SK-N-SH (cell line): ENCODE measurements at regions of chr2 and their contacts with region 1.

Region 1: GRCh38 chr2:80238692-80239469 is 65.7 kb downstream of the LRRTM1 start:
- DNase-seq: peak; percentile 24
- H3K4me3 ChIP-seq: no peak overlapping the region
- H3K27ac ChIP-seq: no peak overlapping the region
- H3K4me1 ChIP-seq: peaks cover 0 to 6% of the 10 kb centered on the region in 2 experiments; a peak in 1 of 4 replicates
- H3K27me3 ChIP-seq: no peaks in the 10 kb centered on the region
- CTCF ChIP-seq: peak; percentile 80
- EP300 ChIP-seq: no peak
- RAD21 ChIP-seq: peak; percentile 56

Region 2: DNA sequence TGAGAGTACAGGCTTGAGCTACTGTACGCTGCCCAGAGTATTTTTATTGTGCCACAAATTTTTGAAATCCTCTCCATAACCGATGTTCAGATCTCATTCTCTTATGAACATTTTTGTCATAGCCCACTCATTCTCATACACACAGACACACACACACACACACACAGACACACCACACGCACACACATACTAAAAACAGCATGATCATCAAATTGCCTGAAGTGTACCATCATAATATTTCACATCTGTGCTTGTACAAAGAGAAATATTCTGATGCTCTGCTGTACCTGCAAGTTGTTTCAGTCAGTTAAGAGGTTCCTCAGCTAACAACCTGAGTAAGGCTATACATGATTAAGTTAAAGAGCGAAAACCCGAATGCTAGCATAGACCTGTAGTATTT is 29.4 kb before region 1 on chr2:
- CTCF ChIA-PET with region 1: no interaction called
- POLR2A ChIA-PET with region 1: no interaction called
- DNase-seq: no peak
- H3K4me3 ChIP-seq: no peak overlapping the region
- H3K27ac ChIP-seq: no peak overlapping the region
- H3K4me1 ChIP-seq: no peaks in the 10 kb centered on the region
- H3K27me3 ChIP-seq: no peaks in the 10 kb centered on the region
- CTCF ChIP-seq: no peak
- EP300 ChIP-seq: no peak
- RAD21 ChIP-seq: no peak

Region 3: GRCh38 chr2:80222644-80223043 is 16.2 kb before region 1 on chr2:
- CTCF ChIA-PET with region 1: interaction called, 25 read pairs
- POLR2A ChIA-PET with region 1: no interaction called
- DNase-seq: no peak
- H3K4me3 ChIP-seq: no peak overlapping the region
- H3K27ac ChIP-seq: no peak overlapping the region
- H3K4me1 ChIP-seq: peaks cover 0 to 4% of the 10 kb centered on the region in 2 experiments; a peak in 1 of 4 replicates
- H3K27me3 ChIP-seq: no peaks in the 10 kb centered on the region
- CTCF ChIP-seq: no peak
- EP300 ChIP-seq: no peak
- RAD21 ChIP-seq: no peak

Region 4: DNA sequence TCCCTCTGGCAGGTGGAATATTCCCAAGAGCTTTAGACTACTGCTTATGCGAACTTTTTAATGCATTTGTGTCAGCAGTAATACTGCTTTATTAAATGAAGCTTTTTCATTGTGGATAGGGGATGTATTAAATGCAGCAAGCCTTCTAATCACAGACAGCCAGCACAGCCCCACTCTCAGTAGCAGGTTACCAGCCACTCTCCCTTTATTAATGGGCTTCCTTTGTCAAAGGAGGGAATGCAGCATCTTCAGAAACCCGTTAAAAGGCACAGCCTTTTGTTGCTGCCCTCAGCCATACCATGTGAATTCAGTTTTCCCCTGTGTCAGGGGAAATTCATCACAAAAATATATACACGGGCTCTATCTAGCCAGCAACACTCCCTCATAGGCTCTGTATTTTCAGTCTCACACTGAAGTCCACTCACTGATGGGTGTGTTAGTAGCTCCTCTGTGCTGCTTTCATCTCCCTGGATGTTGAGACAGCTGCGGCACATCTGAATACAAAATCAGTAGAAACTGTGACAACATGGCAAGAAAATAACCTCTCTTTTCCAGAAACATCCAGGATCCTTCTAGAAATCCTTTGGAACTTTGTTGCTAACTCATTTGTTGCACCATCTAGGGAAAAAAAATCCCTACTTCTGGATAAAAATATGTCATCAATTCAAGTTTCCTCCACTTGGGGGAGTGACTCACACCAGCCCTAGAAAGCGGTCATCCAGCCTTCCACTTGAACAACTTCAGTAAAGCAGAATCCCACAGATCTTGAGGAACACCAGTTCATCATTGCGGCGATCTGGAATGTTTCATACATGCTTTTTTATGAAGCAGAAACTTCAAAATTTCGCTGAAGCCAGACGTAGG is 17.3 kb after region 1 on chr2:
- CTCF ChIA-PET with region 1: interaction called, 18 read pairs
- POLR2A ChIA-PET with region 1: no interaction called
- DNase-seq: peak; percentile 11
- H3K4me3 ChIP-seq: no peak overlapping the region
- H3K27ac ChIP-seq: no peak overlapping the region
- H3K4me1 ChIP-seq: peaks cover 0 to 6% of the 10 kb centered on the region in 2 experiments; a peak in 1 of 4 replicates
- H3K27me3 ChIP-seq: no peaks in the 10 kb centered on the region
- CTCF ChIP-seq: peak; percentile 52
- EP300 ChIP-seq: no peak
- RAD21 ChIP-seq: peak; percentile 45